Right ventricle myocardium inferior (tissue), 1 donor: ENCODE measurements at regions of chr17 and their contacts with region 1.

Region 1: DNA sequence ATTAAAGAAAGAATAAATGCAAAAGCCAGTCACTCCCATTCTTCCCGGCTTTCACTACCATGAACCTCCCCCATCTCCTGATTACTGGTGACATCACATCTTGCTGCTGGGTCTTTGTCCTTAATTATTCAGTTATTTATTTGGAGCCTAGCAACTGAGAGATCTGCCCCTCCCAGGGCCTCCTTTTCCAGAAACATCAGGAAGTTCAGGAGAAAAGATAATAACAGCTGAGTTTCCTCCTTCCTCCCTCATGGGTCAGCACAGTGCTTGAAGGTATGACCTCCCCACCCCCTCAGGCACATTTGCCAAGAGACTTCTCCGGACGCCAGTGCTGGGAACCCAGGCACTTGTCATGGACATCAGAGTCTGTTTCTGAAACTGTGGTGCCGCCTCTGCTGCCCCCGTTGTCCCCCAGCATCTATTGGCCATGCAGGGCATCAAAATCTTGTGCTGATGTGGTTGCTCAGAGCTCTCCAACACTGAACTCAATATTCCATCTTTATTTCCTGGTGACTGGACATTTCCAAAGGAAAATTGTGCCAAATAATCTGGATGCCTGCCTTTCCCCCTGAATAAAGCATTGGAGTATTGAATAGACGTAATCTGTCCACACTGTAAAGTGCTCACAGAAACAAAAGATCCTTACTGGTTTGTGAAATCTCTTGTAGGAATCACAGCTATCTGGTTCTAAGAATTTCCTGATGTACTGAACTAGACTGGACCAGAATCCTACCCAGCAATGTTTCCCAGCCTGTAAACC is 71.8 kb downstream of the ZNF18 start:
- DNase-seq: no peak
- ATAC-seq: no peak

Region 2: DNA sequence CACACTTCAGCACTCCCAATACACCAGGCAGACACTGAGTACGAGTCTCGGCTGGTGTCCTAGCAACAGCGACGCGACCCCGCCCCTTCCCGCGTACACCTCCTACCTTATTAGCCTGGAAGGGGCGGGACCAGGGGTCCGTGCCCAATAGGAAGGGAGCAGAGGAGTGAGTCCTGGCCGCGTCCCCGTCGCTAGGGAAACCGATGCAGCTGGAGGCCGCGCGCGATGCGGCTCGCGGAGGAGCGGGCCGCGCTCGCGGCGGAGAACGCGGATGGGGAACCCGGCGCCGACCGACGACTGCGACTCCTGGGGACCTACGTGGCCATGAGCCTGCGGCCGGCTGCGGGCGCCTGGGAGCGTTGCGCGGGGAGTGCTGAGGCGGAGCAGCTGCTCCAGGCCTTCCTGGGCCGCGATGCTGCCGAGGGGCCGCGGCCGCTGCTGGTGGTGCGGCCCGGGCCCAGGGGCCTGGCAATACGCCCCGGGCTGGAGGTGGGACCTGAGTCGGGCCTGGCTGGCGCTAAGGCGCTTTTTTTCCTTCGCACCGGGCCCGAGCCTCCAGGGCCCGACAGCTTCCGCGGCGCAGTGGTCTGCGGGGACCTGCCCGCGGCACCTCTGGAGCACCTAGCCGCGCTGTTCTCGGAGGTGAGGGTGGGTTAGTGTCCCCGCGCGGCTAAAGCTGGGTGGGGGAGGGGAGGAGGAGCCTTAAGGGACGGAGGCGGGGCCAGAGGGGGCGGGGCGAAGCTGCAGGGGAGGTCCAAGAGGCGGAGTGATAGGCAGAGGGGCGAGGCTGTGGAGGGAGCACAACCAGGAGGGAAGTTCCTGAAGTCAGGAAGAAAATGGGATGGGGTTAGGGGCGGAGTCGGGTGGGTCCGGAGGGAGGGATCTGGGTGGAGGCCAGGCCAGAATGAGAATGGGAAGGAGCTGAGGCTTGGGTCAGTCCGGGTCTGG is 326.9 kb before region 1 on chr17 and contains the start of gene DNAH9:
- intact Hi-C with region 1: no loop called
- DNase-seq: peak; percentile 96
- ATAC-seq: peak; percentile 99
- total RNA-seq, gene DNAH9: not detected

Region 3: DNA sequence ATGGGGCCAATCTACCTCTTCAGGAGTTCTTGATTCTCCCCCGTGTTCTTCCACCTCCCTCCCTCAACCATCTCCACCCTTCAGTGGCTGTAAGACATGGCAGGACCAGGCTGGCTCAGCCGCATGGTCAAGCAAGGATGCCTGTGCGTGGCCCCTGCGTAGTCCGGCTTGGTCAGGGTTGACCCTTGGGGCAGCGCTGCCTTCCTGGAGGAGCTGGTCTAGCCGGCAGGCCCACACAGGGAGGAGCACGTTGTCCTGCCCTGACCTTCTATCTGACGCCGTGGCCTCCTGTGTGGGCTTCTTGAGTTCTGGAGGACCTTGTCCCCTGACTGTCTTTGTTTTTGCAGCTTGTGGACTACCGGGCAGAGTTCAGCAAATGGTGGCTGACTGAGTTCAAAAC is 157.3 kb before region 1 on chr17:
- intact Hi-C with region 1: loop called (anchors 5 kb)
- DNase-seq: no peak
- ATAC-seq: no peak

Region 4: DNA sequence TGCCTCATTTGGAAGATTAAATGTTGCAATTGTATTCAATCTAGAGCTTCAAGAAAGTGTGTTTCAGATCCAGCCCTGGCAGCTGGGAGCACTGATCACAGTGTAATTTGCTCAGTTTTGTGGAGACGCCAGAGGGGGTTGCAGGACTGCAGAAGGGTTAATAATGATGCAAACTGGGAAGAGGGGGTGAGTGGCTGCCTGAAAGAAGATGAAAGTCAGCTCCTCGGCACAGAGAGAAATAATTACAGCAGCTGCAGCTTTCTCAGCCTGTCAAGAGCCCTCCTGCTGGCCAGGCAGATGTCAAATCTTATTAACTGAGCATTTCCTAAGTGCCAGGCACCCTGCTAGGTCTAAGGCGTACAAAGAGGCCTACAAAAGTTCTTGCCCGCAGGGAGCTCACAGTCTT is 25.9 kb before region 1 on chr17:
- intact Hi-C with region 1: no loop called
- DNase-seq: no peak
- ATAC-seq: peak; percentile 76